ENCODE measurements at regions of chr14 and their contacts with region 1.

Region 1: GRCh38 chr14:74084277-74085046 is at the starts of genes ALDH6A1 and LIN52:
- DNase-seq: peak; percentile 100
- H3K4me3 ChIP-seq: peak within 1 kb of the TSS; percentile 80
- H3K27ac ChIP-seq: peak within 1 kb of the TSS; percentile 63
- H3K4me1 ChIP-seq: peaks cover 21% of the 10 kb centered on the region
- H3K27me3 ChIP-seq: no peaks in the 10 kb centered on the region
- CTCF ChIP-seq: 0 out of 2 replicates have a peak, but pooled peaks have one; percentile 28
- total RNA-seq, gene ALDH6A1: 53.1 and 54.5 TPM in 2 replicates
- total RNA-seq, gene LIN52: 18.8 TPM in 2 replicates

Region 2: GRCh38 chr14:73026845-73027542 is 1057.5 kb before region 1 on chr14 and contains the start of gene ZFYVE1:
- CTCF ChIA-PET with region 1: no interaction called
- POLR2A ChIA-PET with region 1: interaction called, 29 read pairs
- intact Hi-C with region 1: no loop called
- DNase-seq: peak; percentile 95
- H3K4me3 ChIP-seq: peak within 1 kb of the TSS; percentile 77
- H3K27ac ChIP-seq: no peak within 1 kb of the TSS
- H3K4me1 ChIP-seq: peaks cover 9% of the 10 kb centered on the region
- H3K27me3 ChIP-seq: no peaks in the 10 kb centered on the region
- CTCF ChIP-seq: no peak
- total RNA-seq, gene ZFYVE1: 8.8 and 9.0 TPM in 2 replicates

Region 3: GRCh38 chr14:74018586-74019407 is 65.7 kb before region 1 on chr14 and contains the starts of genes BBOF1 and ENTPD5:
- CTCF ChIA-PET with region 1: no interaction called
- POLR2A ChIA-PET with region 1: no interaction called
- intact Hi-C with region 1: loop called (anchors 1 kb)
- DNase-seq: peak; percentile 57 to 87
- H3K4me3 ChIP-seq: peak within 1 kb of the TSS; percentile 79
- H3K27ac ChIP-seq: peak within 1 kb of the TSS; percentile 81
- H3K4me1 ChIP-seq: peaks cover 8% of the 10 kb centered on the region
- H3K27me3 ChIP-seq: no peaks in the 10 kb centered on the region
- CTCF ChIP-seq: no peak
- total RNA-seq, gene BBOF1: 5.5 and 6.8 TPM in 2 replicates
- total RNA-seq, gene ENTPD5: 12.3 and 12.6 TPM in 2 replicates

Region 4: GRCh38 chr14:74062829-74063190 is 21.7 kb before region 1 on chr14:
- CTCF ChIA-PET with region 1: interaction called, 8 read pairs
- POLR2A ChIA-PET with region 1: interaction called, 5 read pairs
- intact Hi-C with region 1: loop called (anchors 1 kb)
- DNase-seq: peak; percentile 44 to 87
- H3K4me3 ChIP-seq: peak overlapping the region; percentile 7; the same call in 1 of the 2 replicates
- H3K27ac ChIP-seq: peak overlapping the region; percentile 75
- H3K4me1 ChIP-seq: peaks cover 40% of the 10 kb centered on the region
- H3K27me3 ChIP-seq: no peaks in the 10 kb centered on the region
- CTCF ChIP-seq: no peak

Measured in PC-9 (cell line).